CD14-positive monocyte (primary cell): ENCODE measurements at regions of chr5 and their contacts with region 1.

Region 1: GRCh38 chr5:177444101-177445051 is 2.2 kb upstream of the PRR7 start:
- DNase-seq: no peak
- H3K4me3 ChIP-seq: no peak overlapping the region
- H3K4me3 Mint-ChIP-seq: no peak overlapping the region
- H3K27ac ChIP-seq: no peak overlapping the region
- H3K27ac Mint-ChIP-seq: peak overlapping the region in 4 of 7 donors; percentile 18 to 79 (median 73)
- H3K4me1 ChIP-seq: peaks cover 38 to 57% of the 10 kb centered on the region in 2 donors
- H3K4me1 Mint-ChIP-seq: peaks cover 41% of the 10 kb centered on the region
- H3K27me3 ChIP-seq: peaks cover 0 to 18% of the 10 kb centered on the region in 2 donors
- H3K27me3 Mint-ChIP-seq: peaks cover 18 to 30% (median 23%) of the 10 kb centered on the region in 3 donors
- CTCF ChIP-seq: no peak

Region 2: GRCh38 chr5:177431317-177432142 is 12.8 kb before region 1 on chr5:
- intact Hi-C with region 1: loop called in 1 of 2 experiments (anchors 2 kb)
- DNase-seq: peak; percentile 61 to 70 (median 67)
- H3K4me3 ChIP-seq: peak overlapping the region in 1 of 3 experiments; percentile 59
- H3K4me3 Mint-ChIP-seq: peak overlapping the region; percentile 57 to 70
- H3K27ac ChIP-seq: peak overlapping the region; percentile 98 to 100
- H3K27ac Mint-ChIP-seq: peak overlapping the region; percentile 78 to 100 (median 99)
- H3K4me1 ChIP-seq: peaks cover 60 to 68% of the 10 kb centered on the region in 2 donors
- H3K4me1 Mint-ChIP-seq: peaks cover 50% of the 10 kb centered on the region
- H3K27me3 ChIP-seq: no peaks in the 10 kb centered on the region
- H3K27me3 Mint-ChIP-seq: no peaks in the 10 kb centered on the region
- CTCF ChIP-seq: no peak

Region 3: GRCh38 chr5:177537389-177538361 is 93.3 kb after region 1 on chr5:
- intact Hi-C with region 1: no loop called
- DNase-seq: no peak
- H3K4me3 ChIP-seq: no peak overlapping the region
- H3K4me3 Mint-ChIP-seq: no peak overlapping the region
- H3K27ac ChIP-seq: peak overlapping the region in 1 of 2 donors; percentile 14
- H3K27ac Mint-ChIP-seq: peak overlapping the region in 2 of 7 donors; percentile 7 to 67
- H3K4me1 ChIP-seq: no peaks in the 10 kb centered on the region
- H3K4me1 Mint-ChIP-seq: no peaks in the 10 kb centered on the region
- H3K27me3 ChIP-seq: no peaks in the 10 kb centered on the region
- H3K27me3 Mint-ChIP-seq: peaks cover 0 to 3% (median 1%) of the 10 kb centered on the region in 3 donors
- CTCF ChIP-seq: no peak